Colonic mucosa (tissue), 4 donors: ENCODE measurements at regions of chr15 and their contacts with region 1.

Region 1: GRCh38 chr15:75367913-75368688 is at the start of gene MAN2C1:
- DNase-seq: peak; percentile 98
- H3K4me3 ChIP-seq: peak within 1 kb of the TSS; percentile 77
- H3K27ac ChIP-seq: peak within 1 kb of the TSS; percentile 97
- H3K4me1 ChIP-seq: peaks cover 11% of the 10 kb centered on the region
- H3K27me3 ChIP-seq: no peaks in the 10 kb centered on the region
- CTCF ChIP-seq: peak; percentile 61
- total RNA-seq, gene MAN2C1: 115 to 176 TPM

Region 2: DNA sequence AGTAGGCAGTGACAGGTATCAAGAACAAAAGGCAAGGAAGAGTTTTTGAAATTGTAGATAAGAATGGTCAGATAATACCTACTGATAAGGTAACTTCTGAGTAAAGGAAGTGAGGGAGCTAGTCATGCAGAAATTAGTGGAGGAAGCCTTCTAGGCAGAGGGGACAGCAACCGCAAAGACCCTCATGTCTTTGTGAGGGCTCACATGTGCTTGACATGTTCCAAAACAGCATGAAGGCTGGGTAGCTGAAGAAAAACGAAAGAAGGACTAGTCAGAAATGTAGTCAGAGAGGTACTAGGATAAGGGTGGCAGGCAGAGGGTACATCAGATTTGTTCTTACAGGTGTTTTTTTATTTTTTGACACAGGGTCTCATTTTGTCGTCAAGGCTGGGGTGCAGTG is 78.0 kb after region 1 on chr15:
- intact Hi-C with region 1: loop called (anchors 5 kb)
- DNase-seq: no peak
- H3K4me3 ChIP-seq: no peak overlapping the region
- H3K27ac ChIP-seq: no peak overlapping the region
- H3K4me1 ChIP-seq: peaks cover 9% of the 10 kb centered on the region
- H3K27me3 ChIP-seq: no peaks in the 10 kb centered on the region
- CTCF ChIP-seq: no peak

Region 3: DNA sequence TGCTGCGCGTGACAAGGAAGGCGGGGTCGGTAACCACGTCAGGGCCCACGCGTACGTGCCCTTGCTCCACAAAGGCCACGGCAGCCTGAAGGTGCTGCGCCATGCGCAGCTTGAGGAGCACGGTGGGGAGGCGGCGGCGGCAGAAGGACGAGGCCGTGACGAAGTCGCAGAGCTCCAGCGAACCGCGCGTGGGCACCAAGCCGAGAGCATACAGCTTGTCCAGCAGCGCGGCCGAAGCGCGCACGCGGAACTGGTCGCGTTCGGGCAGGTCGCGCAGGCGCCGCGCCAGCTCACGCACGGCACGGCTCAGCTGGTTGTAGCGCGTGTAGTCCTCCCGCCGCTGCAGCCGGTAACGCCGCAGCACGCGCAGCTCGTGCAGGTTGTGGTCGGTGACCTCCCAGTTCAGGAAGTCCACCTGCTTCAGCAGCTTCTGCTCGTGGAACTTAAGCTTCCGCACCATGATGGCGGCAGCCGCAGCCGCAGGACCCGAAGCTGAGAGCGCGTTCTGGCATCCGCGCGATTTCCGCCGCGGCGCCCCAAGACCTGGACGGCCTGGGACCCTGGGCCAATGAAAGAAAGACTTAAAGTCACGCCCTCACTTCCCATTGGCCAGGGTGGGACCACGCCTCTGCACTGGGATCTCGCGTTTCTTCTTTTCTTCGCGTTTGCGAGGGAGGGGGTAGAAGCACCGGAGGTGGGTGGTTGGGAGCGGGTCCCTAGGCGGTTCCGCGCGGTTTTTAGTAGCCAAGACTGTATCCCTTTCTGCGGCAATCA is 271.8 kb after region 1 on chr15 and contains the start of gene IMP3:
- intact Hi-C with region 1: loop called (anchors 10 kb)
- DNase-seq: peak; percentile 96
- H3K4me3 ChIP-seq: peak within 1 kb of the TSS; percentile 61
- H3K27ac ChIP-seq: peak within 1 kb of the TSS; percentile 90
- H3K4me1 ChIP-seq: peaks cover 10% of the 10 kb centered on the region
- H3K27me3 ChIP-seq: no peaks in the 10 kb centered on the region
- CTCF ChIP-seq: no peak
- total RNA-seq, gene IMP3: 55.3 to 94.6 TPM

Region 4: DNA sequence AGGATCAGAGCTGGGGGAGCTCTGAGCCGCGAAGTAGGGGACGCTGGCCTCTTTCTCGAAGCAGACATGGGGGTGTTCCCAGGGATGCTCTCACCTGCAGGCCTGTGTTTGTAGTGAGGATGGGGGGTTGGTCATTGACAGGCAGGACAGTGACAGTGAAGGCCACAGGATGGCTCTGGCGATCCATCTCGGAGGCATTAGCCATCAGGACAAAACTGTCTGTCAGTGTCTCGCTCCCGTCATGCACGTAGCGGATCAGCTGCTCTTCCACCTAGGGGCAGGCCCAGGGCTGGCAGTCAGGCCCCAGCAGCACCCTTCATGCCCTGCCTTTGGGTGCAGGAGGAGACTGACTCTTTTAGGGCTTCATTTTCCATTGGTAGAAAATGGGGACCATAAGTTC is 316.5 kb after region 1 on chr15:
- intact Hi-C with region 1: loop called (anchors 5 kb)
- DNase-seq: no peak
- H3K4me3 ChIP-seq: no peak overlapping the region
- H3K27ac ChIP-seq: no peak overlapping the region
- H3K4me1 ChIP-seq: no peaks in the 10 kb centered on the region
- H3K27me3 ChIP-seq: no peaks in the 10 kb centered on the region
- CTCF ChIP-seq: no peak